Dorsolateral prefrontal cortex (tissue), 120 donors: ENCODE measurements at regions of chr6 and their contacts with region 1.

Region 1: DNA sequence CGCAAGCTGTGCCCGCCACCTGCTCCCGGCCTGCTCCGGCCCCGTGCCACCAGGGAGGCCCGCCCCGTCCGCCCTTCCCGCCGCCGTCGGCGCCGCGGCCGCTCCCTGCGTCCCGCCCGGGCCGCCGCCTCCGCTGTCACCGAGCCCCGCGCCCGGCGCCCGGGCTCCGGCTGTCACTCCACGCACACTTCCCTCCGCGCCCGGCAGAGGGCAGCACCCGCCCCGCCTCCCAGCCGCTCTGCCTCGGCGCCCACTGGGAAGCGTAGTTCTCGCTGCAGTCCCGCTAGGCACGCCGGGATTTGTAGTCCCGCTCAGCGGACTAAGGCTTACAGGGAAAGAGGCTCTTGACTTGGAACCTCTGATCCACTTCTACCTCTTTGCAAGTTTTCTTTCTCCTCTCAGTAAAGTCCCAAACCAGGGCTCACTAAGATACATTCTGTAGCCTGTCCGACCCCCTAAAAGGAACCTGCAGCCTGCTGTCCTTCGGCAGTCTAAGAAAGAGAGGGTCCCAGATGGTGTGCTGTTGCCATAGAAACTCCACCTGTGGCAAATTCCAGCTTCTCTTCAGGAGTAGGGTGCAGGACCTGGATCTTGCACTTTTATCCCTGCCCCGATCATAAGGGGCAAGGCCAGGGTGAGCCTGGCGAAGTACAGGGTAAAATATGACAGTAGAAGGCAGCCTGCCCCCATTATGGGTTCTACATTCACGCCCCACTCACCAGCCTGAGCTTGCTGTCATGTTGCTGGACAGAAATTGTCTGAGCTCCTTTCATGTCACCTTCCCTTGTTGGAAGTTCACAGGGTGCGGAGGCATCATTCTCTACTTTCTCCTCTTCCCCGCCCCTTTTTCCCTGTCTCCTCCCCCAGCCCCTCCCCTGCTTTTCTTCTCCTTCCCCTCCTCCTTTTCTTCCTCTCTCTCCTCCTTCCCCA is at the start of gene TFEB:
- DNase-seq: peak; percentile 95 to 97 (median 96)
- H3K4me3 ChIP-seq: peak within 1 kb of the TSS; percentile 51 to 98 (median 85)
- H3K27ac ChIP-seq: peak within 1 kb of the TSS; percentile 90 to 100 (median 99)
- H3K27me3 ChIP-seq: no peaks in the 10 kb centered on the region
- CTCF ChIP-seq: peak; percentile 73 to 99 (median 88)
- total RNA-seq, gene TFEB: 13.9 to 125 (median 40.5) TPM

Region 2: GRCh38 chr6:41424370-41425058 is 311.2 kb before region 1 on chr6:
- intact Hi-C with region 1: loop called in 1 of 2 experiments (anchors 5 kb)
- DNase-seq: peak; percentile 59 to 93 (median 82)
- H3K4me3 ChIP-seq: no peak overlapping the region
- H3K27ac ChIP-seq: peak overlapping the region in 19 of 59 donors; percentile 1 to 95 (median 28)
- H3K27me3 ChIP-seq: peaks cover 0 to 14% (median 0%) of the 10 kb centered on the region in 45 donors
- CTCF ChIP-seq: peak; percentile 73 to 93 (median 87)

Region 3: GRCh38 chr6:41659935-41660505 is 75.7 kb before region 1 on chr6:
- intact Hi-C with region 1: no loop called
- DNase-seq: no peak
- H3K4me3 ChIP-seq: no peak overlapping the region
- H3K27ac ChIP-seq: no peak overlapping the region
- H3K27me3 ChIP-seq: peaks cover 0 to 30% (median 3%) of the 10 kb centered on the region in 45 donors
- CTCF ChIP-seq: no peak

Region 4: GRCh38 chr6:41683510-41684310 is 52.0 kb before region 1 on chr6:
- intact Hi-C with region 1: loop called in 1 of 2 experiments (anchors 1 kb)
- DNase-seq: peak; percentile 70 to 88 (median 85)
- H3K4me3 ChIP-seq: peak overlapping the region in 58 of 59 donors; percentile 15 to 71 (median 54)
- H3K27ac ChIP-seq: peak overlapping the region; percentile 77 to 100 (median 95)
- H3K27me3 ChIP-seq: no peaks in the 10 kb centered on the region
- CTCF ChIP-seq: peak; percentile 83 to 98 (median 95)

Region 5: DNA sequence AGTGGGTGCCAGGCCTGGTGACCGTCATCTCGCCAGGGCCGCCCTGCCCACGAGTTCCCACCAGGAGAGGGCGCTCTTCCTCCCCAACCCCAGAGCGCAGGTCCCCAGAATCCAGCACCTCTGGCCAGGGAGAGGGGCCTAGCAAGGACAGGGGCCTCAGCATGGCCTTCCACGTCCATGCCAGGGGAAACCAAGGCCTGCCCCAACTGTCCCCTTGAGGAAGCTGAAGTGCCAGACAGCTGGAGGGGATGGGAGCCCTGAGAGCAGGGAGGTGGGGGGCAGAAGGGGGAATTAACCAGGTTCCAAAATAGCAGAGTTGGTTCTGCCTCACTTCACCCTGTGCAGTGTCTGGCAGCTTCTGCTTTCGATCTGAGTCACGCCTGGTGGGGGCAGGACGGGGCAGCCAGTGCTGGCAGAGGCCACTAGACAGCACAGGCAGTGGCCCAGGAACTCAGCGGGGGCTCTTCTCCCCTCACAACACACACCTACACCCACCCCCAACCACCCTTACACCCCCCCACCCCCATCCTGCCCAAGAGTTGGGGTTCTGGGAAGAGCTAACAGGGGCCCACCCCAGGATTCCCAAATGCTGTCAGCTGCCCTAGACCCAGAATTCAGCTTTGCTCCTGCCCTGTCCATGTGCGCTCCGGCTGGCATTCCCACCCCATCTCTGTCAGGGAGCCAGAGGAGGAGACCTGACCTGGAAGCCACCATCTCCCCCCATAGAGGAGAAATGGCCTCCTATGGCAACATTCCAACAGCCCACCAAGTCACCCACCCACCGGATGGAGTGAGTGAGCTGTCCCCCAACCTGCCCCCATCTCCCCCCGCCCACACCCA is 29.5 kb before region 1 on chr6:
- intact Hi-C with region 1: loop called (anchors 1 kb)
- DNase-seq: peak; percentile 49 to 89 (median 84)
- H3K4me3 ChIP-seq: peak overlapping the region in 57 of 59 donors; percentile 24 to 73 (median 54)
- H3K27ac ChIP-seq: peak overlapping the region; percentile 89 to 100 (median 99)
- H3K27me3 ChIP-seq: no peaks in the 10 kb centered on the region
- CTCF ChIP-seq: peak; percentile 43 to 91 (median 76)

Region 6: GRCh38 chr6:41787219-41787917 is 51.7 kb after region 1 on chr6 and contains the start of gene TOMM6:
- intact Hi-C with region 1: loop called in 1 of 2 experiments (anchors 2 kb)
- DNase-seq: peak; percentile 90 to 96 (median 94)
- H3K4me3 ChIP-seq: peak within 1 kb of the TSS; percentile 70 to 100 (median 94)
- H3K27ac ChIP-seq: peak within 1 kb of the TSS; percentile 75 to 99 (median 93)
- H3K27me3 ChIP-seq: no peaks in the 10 kb centered on the region
- CTCF ChIP-seq: peak; percentile 80 to 99 (median 92)
- total RNA-seq, gene TOMM6: 67.4 to 141 (median 99.4) TPM

Region 7: GRCh38 chr6:42050266-42051032 is 314.8 kb after region 1 on chr6 and contains the start of gene TAF8:
- intact Hi-C with region 1: loop called (anchors 1 to 2 kb)
- DNase-seq: peak; percentile 84 to 94 (median 92)
- H3K4me3 ChIP-seq: peak within 1 kb of the TSS; percentile 46 to 95 (median 78)
- H3K27ac ChIP-seq: peak within 1 kb of the TSS; percentile 84 to 100 (median 96)
- H3K27me3 ChIP-seq: no peaks in the 10 kb centered on the region
- CTCF ChIP-seq: peak in 35 of 56 donors; percentile 5 to 64 (median 35)
- total RNA-seq, gene TAF8: 17.7 to 55.8 (median 29.5) TPM